ENCODE measurements at regions of chr5 and their contacts with region 1.

Region 1: DNA sequence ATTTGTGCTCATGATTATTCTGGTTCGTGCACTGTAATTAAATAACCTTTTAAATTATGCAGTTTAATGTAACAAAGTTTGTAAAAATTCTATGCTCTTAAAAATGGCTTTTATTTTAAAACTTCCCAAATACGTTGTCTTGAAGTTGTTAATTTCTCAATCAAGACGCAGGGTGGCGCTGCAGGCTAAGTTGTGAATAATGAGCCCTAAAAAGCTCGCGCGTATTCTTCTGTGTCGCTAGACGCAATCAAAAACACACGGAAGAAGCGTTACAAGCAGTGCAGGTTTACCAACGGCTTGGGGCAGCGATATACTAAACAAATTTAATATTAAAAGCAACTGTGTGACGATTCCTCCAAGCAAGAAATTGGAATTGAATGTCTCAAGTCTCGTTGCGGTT is at the start of gene PCDHB4:
- DNase-seq: peak; percentile 69
- ATAC-seq: peak; percentile 73
- H3K4me3 Mint-ChIP-seq: peak within 1 kb of the TSS; percentile 51
- H3K27ac Mint-ChIP-seq: no peak within 1 kb of the TSS
- H3K4me1 Mint-ChIP-seq: no peaks in the 10 kb centered on the region
- H3K27me3 Mint-ChIP-seq: no peaks in the 10 kb centered on the region
- CTCF ChIP-seq: peak; percentile 79
- total RNA-seq, gene PCDHB4: 2.3 to 2.6 TPM (median 2.3 TPM) in 3 replicates

Region 2: GRCh38 chr5:141051526-141051876 is 70.1 kb before region 1 on chr5:
- CTCF ChIA-PET with region 1: no interaction called
- POLR2A ChIA-PET with region 1: no interaction called
- DNase-seq: peak; percentile 55
- ATAC-seq: peak; percentile 80
- H3K4me3 Mint-ChIP-seq: peak overlapping the region; percentile 82
- H3K27ac Mint-ChIP-seq: peak overlapping the region; percentile 35
- H3K4me1 Mint-ChIP-seq: peaks cover 13% of the 10 kb centered on the region
- H3K27me3 Mint-ChIP-seq: peaks cover 45% of the 10 kb centered on the region
- CTCF ChIP-seq: no peak

Region 3: GRCh38 chr5:141135030-141135717 is 13.6 kb after region 1 on chr5 and contains the start of gene PCDHB5:
- CTCF ChIA-PET with region 1: interaction called, 42 read pairs
- POLR2A ChIA-PET with region 1: no interaction called
- DNase-seq: peak; percentile 72
- ATAC-seq: peak; percentile 89
- H3K4me3 Mint-ChIP-seq: peak within 1 kb of the TSS; percentile 74
- H3K27ac Mint-ChIP-seq: peak within 1 kb of the TSS; percentile 64; the same call in 1 of the 2 replicates
- H3K4me1 Mint-ChIP-seq: peaks cover 4% of the 10 kb centered on the region; the same call in 1 of the 2 replicates
- H3K27me3 Mint-ChIP-seq: no peaks in the 10 kb centered on the region
- CTCF ChIP-seq: peak; percentile 72
- total RNA-seq, gene PCDHB5: 6.8 to 12.5 TPM (median 8.5 TPM) in 3 replicates

Region 4: GRCh38 chr5:141149812-141150211 is 28.2 kb after region 1 on chr5 and contains the start of gene PCDHB6:
- CTCF ChIA-PET with region 1: interaction called, 36 read pairs
- POLR2A ChIA-PET with region 1: no interaction called
- DNase-seq: no peak
- ATAC-seq: peak; percentile 74
- H3K4me3 Mint-ChIP-seq: no peak within 1 kb of the TSS
- H3K27ac Mint-ChIP-seq: no peak within 1 kb of the TSS
- H3K4me1 Mint-ChIP-seq: no peaks in the 10 kb centered on the region
- H3K27me3 Mint-ChIP-seq: peaks cover 4% of the 10 kb centered on the region; the same call in 1 of the 2 replicates
- CTCF ChIP-seq: no peak
- total RNA-seq, gene PCDHB6: 0.23 to 0.37 TPM (median 0.24 TPM) in 3 replicates

Region 5: GRCh38 chr5:141172378-141173204 is 51.0 kb after region 1 on chr5 and contains the start of gene PCDHB7:
- CTCF ChIA-PET with region 1: interaction called, 11 read pairs
- POLR2A ChIA-PET with region 1: no interaction called
- DNase-seq: peak; percentile 57
- ATAC-seq: no peak
- H3K4me3 Mint-ChIP-seq: no peak within 1 kb of the TSS
- H3K27ac Mint-ChIP-seq: no peak within 1 kb of the TSS
- H3K4me1 Mint-ChIP-seq: no peaks in the 10 kb centered on the region
- H3K27me3 Mint-ChIP-seq: peaks cover 3% of the 10 kb centered on the region; the same call in 1 of the 2 replicates
- CTCF ChIP-seq: peak; percentile 66
- total RNA-seq, gene PCDHB7: 0.17 to 0.27 TPM (median 0.23 TPM) in 3 replicates

Region 6: DNA sequence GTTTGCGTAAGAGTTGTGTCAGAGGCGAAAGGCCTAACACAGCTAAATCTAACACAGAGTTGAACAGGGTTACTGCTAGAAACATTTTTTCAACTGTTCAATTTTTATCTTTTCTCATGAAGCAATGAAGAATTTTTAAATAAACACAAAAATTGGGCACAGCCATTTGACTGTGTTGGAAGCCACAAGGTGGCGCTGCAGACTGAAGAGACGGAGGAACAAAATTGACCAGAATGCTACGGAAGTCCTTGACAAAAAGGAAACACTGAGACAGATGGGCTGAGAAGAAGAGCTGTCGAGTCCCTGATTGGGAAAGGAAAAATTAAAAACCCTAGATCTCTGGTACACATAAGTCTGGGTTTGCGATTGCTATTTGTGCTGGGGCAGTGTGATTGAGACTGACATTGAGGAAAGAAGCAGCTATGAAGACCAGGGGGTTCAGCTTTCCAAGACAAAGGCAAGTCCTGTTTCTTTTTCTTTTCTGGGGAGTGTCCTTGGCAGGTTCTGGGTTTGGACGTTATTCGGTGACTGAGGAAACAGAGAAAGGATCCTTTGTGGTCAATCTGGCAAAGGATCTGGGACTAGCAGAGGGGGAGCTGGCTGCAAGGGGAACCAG is 65.4 kb after region 1 on chr5 and contains the start of gene PCDHB9:
- CTCF ChIA-PET with region 1: interaction called, 27 read pairs
- POLR2A ChIA-PET with region 1: interaction called, 3 read pairs
- DNase-seq: peak; percentile 71
- ATAC-seq: peak; percentile 58
- H3K4me3 Mint-ChIP-seq: peak within 1 kb of the TSS; percentile 21
- H3K27ac Mint-ChIP-seq: no peak within 1 kb of the TSS; the same call in 1 of the 2 replicates
- H3K4me1 Mint-ChIP-seq: peaks cover 15% of the 10 kb centered on the region
- H3K27me3 Mint-ChIP-seq: peaks cover 4% of the 10 kb centered on the region; the same call in 1 of the 2 replicates
- CTCF ChIP-seq: peak; percentile 49; the same call in 1 of the 2 replicates
- total RNA-seq, gene PCDHB9: 1.6 to 2.3 TPM (median 1.7 TPM) in 3 replicates

Region 7: GRCh38 chr5:141192110-141192732 is 70.7 kb after region 1 on chr5 and contains the start of gene PCDHB10:
- CTCF ChIA-PET with region 1: interaction called, 16 read pairs
- POLR2A ChIA-PET with region 1: no interaction called
- DNase-seq: peak; percentile 89
- ATAC-seq: peak; percentile 88
- H3K4me3 Mint-ChIP-seq: peak within 1 kb of the TSS; percentile 58
- H3K27ac Mint-ChIP-seq: no peak within 1 kb of the TSS
- H3K4me1 Mint-ChIP-seq: peaks cover 4% of the 10 kb centered on the region
- H3K27me3 Mint-ChIP-seq: peaks cover 4% of the 10 kb centered on the region
- CTCF ChIP-seq: peak; percentile 70; the same call in 1 of the 2 replicates
- total RNA-seq, gene PCDHB10: 1.4 to 1.9 TPM (median 1.7 TPM) in 3 replicates

Region 8: GRCh38 chr5:141199359-141200235 is 78.0 kb after region 1 on chr5 and contains the start of gene PCDHB11:
- CTCF ChIA-PET with region 1: interaction called, 19 read pairs
- POLR2A ChIA-PET with region 1: no interaction called
- DNase-seq: no peak
- ATAC-seq: peak; percentile 67
- H3K4me3 Mint-ChIP-seq: peak within 1 kb of the TSS; percentile 24
- H3K27ac Mint-ChIP-seq: no peak within 1 kb of the TSS
- H3K4me1 Mint-ChIP-seq: peaks cover 7% of the 10 kb centered on the region
- H3K27me3 Mint-ChIP-seq: no peaks in the 10 kb centered on the region; the same call in 1 of the 2 replicates
- CTCF ChIP-seq: peak; percentile 32; the same call in 1 of the 2 replicates
- total RNA-seq, gene PCDHB11: 0.61 to 1.2 TPM (median 0.92 TPM) in 3 replicates